Dendritic cell treated with granulocyte-macrophage colony-stimulating factor and Interleukin-4, amounts not matched to agents 40 ng/mL and 50 ng/mL, for 4 days (primary cell): ENCODE measurements at regions of chr2 and their contacts with region 1.

Region 1: DNA sequence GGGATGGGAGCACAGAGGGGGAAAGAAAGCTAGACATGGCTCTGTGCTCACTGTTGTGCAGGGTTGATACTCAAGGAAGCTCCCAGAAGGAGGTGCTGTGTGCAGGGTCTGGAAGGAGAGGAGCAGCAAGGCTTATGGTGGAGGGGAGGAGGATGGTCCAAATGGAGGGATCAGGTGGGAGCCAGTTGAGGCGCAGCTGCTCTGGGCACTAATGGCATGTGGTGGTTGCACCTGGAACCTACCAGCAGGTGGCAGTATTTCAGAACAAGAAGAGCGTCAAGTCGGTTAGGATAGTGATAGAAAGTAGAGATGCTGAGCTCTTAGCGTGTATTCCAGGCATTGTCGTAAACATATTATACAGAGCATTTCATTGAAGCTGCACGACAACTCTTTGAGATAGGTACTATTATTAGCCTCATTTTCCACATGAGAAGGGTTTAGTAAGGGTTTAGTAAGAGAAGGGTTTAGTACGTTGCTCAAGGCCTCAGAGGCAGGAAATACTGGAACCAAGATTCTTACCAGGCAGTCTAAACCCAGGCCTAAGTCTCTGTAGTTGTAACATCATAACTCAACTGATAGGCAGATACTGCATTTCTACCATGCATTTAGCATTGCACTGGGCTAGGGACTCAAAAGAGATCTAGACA is 223.7 kb downstream of the CYP26B1 start:
- H3K4me3 Mint-ChIP-seq: no peak overlapping the region
- H3K27ac Mint-ChIP-seq: no peak overlapping the region
- H3K4me1 Mint-ChIP-seq: peaks cover 9% of the 10 kb centered on the region
- H3K27me3 Mint-ChIP-seq: no peaks in the 10 kb centered on the region

Region 2: GRCh38 chr2:71243634-71244304 is 680.2 kb before region 1 on chr2:
- intact Hi-C with region 1: no loop called
- H3K4me3 Mint-ChIP-seq: no peak overlapping the region
- H3K27ac Mint-ChIP-seq: no peak overlapping the region
- H3K4me1 Mint-ChIP-seq: no peaks in the 10 kb centered on the region
- H3K27me3 Mint-ChIP-seq: peaks cover 20% of the 10 kb centered on the region

Region 3: DNA sequence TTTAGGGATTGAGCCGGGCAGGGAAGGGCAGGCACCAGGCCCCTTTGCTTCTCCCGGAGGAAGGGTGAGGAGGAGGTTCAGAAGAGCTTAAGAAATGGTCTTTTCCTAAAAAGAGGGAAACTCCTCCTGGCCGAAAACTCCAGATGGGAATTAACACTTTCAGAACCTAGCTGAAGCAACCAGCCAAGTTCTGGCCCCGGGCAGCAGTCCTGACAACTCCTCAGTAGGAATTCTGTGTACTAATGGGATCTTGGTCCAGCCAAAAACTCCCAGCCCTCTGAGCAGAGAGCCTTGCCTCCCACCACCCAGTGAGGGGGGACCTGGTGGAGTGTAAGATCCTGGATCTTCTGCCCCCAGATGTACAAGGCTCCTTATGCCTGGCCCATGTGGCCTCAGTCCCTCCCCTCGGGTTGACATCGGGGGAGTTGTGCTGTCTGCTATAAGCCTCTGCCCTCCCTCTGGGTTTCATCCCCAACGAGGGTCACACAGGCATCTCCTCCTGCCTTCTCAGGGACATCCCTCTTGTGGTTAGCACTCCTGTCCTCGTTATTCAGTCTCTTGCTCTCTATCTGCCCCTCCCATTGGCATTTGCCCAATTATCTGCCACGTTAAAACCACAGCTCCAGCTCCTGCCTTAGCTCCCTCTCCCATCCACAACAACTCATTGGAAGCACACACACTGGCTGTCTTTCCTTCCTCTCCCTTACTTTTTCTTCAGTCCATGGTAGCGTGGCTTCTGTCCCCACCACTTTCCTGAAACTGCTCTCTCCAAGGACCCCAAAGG is 39.1 kb after region 1 on chr2:
- intact Hi-C with region 1: no loop called
- H3K4me3 Mint-ChIP-seq: no peak overlapping the region
- H3K27ac Mint-ChIP-seq: no peak overlapping the region
- H3K4me1 Mint-ChIP-seq: no peaks in the 10 kb centered on the region
- H3K27me3 Mint-ChIP-seq: no peaks in the 10 kb centered on the region

Region 4: DNA sequence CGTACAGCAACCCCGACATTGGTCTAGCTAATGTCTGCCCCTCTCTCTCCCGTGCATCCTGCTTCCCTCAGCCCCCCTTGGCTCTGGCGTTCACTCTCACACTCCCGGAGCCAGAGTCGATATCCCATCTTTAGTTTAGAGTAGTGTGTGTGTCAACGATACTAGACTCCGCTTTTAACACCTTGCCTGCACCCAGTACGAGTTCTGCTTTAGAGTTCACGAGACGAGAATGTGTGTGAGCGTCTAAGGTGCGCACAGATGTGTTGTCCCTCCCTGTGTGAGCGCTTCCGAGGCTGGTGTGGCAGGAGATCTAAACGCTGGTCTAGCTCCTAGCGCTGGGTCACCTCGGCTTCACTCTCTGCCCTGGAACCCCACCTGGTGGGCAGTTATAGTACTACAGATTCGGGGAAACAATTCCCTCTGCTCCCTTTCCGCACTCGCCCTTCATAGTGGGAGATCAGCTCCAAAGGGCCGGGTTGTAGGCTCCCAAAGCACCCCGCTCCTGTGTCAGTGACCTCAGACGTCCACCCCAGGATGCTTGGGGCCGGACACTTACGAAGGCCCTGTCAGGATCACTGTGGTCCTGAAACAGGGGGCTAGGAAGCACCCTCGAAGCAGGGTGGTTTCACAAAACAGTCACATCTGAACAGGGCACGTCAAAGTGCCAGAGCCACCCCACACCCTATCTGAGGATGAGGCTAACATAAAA is 226.3 kb after region 1 on chr2:
- intact Hi-C with region 1: loop called (anchors 1 kb)
- H3K4me3 Mint-ChIP-seq: no peak overlapping the region
- H3K27ac Mint-ChIP-seq: no peak overlapping the region
- H3K4me1 Mint-ChIP-seq: peaks cover 37% of the 10 kb centered on the region
- H3K27me3 Mint-ChIP-seq: peaks cover 74% of the 10 kb centered on the region

Region 5: GRCh38 chr2:72579591-72580180 is 655.7 kb after region 1 on chr2:
- intact Hi-C with region 1: loop called (anchors 1 kb)
- H3K4me3 Mint-ChIP-seq: no peak overlapping the region
- H3K27ac Mint-ChIP-seq: no peak overlapping the region
- H3K4me1 Mint-ChIP-seq: no peaks in the 10 kb centered on the region
- H3K27me3 Mint-ChIP-seq: no peaks in the 10 kb centered on the region